Activated CD8-positive, alpha-beta T cell treated with anti-CD3 and anti-CD28 coated beads, Interleukin-2, amount 10 ng/mL, durations not matched to agents 7 days and 5 days (primary cell): ENCODE measurements at regions of chr10 and their contacts with region 1.

Region 1: GRCh38 chr10:96339957-96340904 is 18.6 kb downstream of the OPALIN start:
- DNase-seq: peak; percentile 71
- ATAC-seq: peak; percentile 76
- H3K4me3 Mint-ChIP-seq: no peak overlapping the region
- H3K27ac Mint-ChIP-seq: no peak overlapping the region
- H3K4me1 Mint-ChIP-seq: no peaks in the 10 kb centered on the region
- H3K27me3 Mint-ChIP-seq: no peaks in the 10 kb centered on the region

Region 2: DNA sequence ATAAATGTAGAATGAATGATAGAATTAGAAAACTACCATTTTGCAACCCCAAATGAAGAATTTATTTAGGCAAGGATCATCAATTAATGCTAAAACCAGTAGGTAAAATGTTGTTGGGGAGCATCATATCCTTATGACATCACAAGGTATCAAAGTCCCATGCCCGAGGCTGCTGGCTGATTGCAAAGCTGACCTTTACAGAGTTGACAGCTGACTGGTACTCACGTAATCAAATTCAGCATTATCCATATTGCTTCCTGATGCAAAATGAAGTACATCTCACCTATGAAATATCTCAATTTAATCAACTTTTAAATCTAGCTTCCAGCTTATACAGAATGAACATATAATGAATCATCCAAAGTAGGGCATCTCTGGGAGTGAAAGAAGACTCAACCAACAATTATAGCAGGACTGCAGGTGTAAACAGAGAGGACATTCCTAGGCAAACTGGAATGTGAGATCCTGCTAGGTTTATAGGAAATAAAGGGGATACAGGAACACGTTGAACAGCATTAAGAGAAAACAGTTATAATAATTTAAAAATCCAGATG is 58.7 kb before region 1 on chr10:
- CTCF ChIA-PET with region 1: no interaction called
- POLR2A ChIA-PET with region 1: no interaction called
- DNase-seq: no peak
- ATAC-seq: no peak
- H3K4me3 Mint-ChIP-seq: no peak overlapping the region
- H3K27ac Mint-ChIP-seq: no peak overlapping the region
- H3K4me1 Mint-ChIP-seq: no peaks in the 10 kb centered on the region
- H3K27me3 Mint-ChIP-seq: peaks cover 6% of the 10 kb centered on the region

Region 3: GRCh38 chr10:96292971-96293920 is 47.0 kb before region 1 on chr10:
- CTCF ChIA-PET with region 1: interaction called, 13 read pairs
- POLR2A ChIA-PET with region 1: no interaction called
- DNase-seq: peak; percentile 30
- ATAC-seq: no peak
- H3K4me3 Mint-ChIP-seq: no peak overlapping the region
- H3K27ac Mint-ChIP-seq: no peak overlapping the region
- H3K4me1 Mint-ChIP-seq: peaks cover 13% of the 10 kb centered on the region
- H3K27me3 Mint-ChIP-seq: peaks cover 9% of the 10 kb centered on the region

Region 4: DNA sequence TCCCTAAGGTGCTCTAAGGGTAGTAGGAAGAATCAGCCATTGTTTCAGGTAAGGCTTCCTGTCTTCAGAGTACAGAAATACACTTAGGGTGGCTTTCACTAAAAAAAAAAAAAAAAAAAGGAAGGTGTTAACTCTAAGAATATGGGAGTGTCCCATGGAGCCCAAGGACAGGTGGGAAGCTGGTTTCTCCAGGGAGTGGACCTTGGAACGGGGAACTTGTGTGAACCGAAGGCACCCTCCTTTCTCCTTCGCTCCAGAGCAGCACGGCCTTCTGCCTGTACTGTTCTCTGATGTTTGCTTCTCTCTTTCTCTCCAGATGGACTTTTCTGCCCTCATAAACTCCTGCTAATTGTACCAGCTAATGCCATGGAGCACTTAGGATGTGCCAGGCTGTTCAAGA is 12.4 kb after region 1 on chr10:
- CTCF ChIA-PET with region 1: no interaction called
- POLR2A ChIA-PET with region 1: no interaction called
- DNase-seq: no peak
- ATAC-seq: no peak
- H3K4me3 Mint-ChIP-seq: no peak overlapping the region
- H3K27ac Mint-ChIP-seq: no peak overlapping the region
- H3K4me1 Mint-ChIP-seq: no peaks in the 10 kb centered on the region
- H3K27me3 Mint-ChIP-seq: peaks cover 8% of the 10 kb centered on the region